Esophagus squamous epithelium (tissue), 5 donors: ENCODE measurements at regions of chr11 and their contacts with region 1.

Region 1: GRCh38 chr11:83193315-83194280 is at the start of gene ANKRD42:
- DNase-seq: peak; percentile 69
- H3K4me3 ChIP-seq: peak within 1 kb of the TSS; percentile 69 to 91 (median 80)
- H3K27ac ChIP-seq: peak within 1 kb of the TSS; percentile 89 to 94 (median 92)
- H3K4me1 ChIP-seq: peaks cover 10 to 49% (median 20%) of the 10 kb centered on the region in 3 donors
- H3K27me3 ChIP-seq: no peaks in the 10 kb centered on the region
- CTCF ChIP-seq: no peak
- POLR2A ChIP-seq: peak in 3 of 4 donors; percentile 33 to 85 (median 73)
- total RNA-seq, gene ANKRD42: 3.9 to 7.4 (median 5.2) TPM

Region 2: DNA sequence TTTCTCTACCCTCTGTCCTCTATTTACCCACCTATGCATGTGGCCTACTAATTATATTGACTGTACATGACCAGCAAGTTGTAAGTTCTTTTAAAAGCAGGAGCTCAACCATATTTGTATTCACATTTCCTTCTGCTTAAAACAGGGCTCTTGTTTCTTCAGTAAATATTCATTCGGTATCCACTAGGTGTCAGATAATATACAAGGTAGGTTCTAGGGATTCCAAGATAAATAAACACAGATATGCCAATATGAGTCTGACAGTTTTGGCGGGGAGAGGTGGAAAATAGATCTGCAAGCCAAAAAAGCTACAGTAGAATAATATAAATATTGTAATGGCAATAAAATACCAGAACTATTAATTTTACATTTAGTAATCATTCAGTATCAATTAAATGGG is 106.6 kb before region 1 on chr11:
- intact Hi-C with region 1: no loop called
- DNase-seq: no peak
- H3K4me3 ChIP-seq: no peak overlapping the region
- H3K27ac ChIP-seq: no peak overlapping the region
- H3K4me1 ChIP-seq: peaks cover 0 to 22% (median 0%) of the 10 kb centered on the region in 3 donors
- H3K27me3 ChIP-seq: no peaks in the 10 kb centered on the region
- CTCF ChIP-seq: peak in 3 of 6 experiments; percentile 27 to 53 (median 42)
- POLR2A ChIP-seq: no peak

Region 3: GRCh38 chr11:83285771-83286528 is 92.4 kb after region 1 on chr11 and contains the start of gene CCDC90B:
- intact Hi-C with region 1: loop called (anchors 10 kb)
- DNase-seq: peak; percentile 87
- H3K4me3 ChIP-seq: peak within 1 kb of the TSS; percentile 67 to 90 (median 76)
- H3K27ac ChIP-seq: peak within 1 kb of the TSS; percentile 94 to 99 (median 97)
- H3K4me1 ChIP-seq: peaks cover 20 to 47% (median 25%) of the 10 kb centered on the region in 3 donors
- H3K27me3 ChIP-seq: no peaks in the 10 kb centered on the region
- CTCF ChIP-seq: peak in 1 of 6 experiments; percentile 26
- POLR2A ChIP-seq: peak in 3 of 4 donors; percentile 14 to 84 (median 75)
- total RNA-seq, gene CCDC90B: 17.8 to 35.0 (median 27.6) TPM